ENCODE measurements at regions of chr6 and their contacts with region 1.

Region 1: DNA sequence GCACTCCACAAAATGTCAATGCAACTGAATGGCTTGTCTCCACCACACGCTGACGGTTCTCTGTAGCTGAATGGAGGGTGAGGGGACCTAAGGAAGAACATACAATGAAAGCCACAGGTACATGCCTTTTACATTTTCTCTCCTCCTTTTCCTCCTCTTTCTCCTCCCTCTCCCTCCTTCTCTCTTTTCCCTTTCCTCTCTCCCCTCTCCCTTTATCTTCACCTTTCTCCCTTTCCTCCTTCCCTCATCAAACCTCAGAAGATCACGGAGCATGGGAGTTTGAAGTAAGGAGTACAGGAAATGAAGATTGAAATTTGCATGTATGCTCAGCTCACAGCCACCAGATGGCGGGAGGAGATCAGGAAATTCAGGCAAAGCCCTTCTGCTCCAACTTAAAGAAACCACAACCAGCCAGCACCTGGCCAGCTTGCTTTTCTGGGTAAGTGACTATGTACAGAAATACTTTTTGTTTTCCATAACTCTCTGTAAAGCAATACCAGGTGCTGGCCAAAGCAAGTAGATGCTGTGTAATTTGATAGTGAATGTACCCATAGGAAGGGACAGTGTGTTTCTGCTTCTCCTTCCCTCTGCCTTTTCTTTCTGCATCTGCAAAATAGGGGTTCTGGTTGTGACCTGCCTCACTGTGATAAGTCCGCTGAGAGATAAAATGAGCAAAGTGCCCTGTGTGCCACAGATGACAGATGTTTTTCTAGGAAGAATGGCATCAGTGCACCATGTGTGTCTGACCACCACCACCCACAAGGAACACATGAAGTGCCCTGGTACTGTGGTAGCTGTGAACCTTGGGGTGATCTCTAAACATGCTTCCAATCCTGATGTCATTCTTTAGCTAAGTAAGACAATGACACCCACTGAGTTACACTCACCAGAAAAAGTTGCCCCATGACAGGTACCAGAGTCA is 18.6 kb upstream of the FOXO3 start:
- DNase-seq: peak; percentile 40 to 73
- ATAC-seq: peak; percentile 87 to 95
- H3K4me3 ChIP-seq: peak overlapping the region; percentile 16; the same call in 2 of the 3 replicates
- H3K27ac ChIP-seq: no peak overlapping the region
- H3K4me1 ChIP-seq: no peaks in the 10 kb centered on the region
- CTCF ChIP-seq: peak; percentile 92
- EP300 ChIP-seq: no peak
- POLR2A ChIP-seq: no peak
- RAD21 ChIP-seq: peak; percentile 92 to 96

Region 2: GRCh38 chr6:108531336-108531735 is 10.8 kb before region 1 on chr6:
- CTCF ChIA-PET with region 1: interaction called, 12 read pairs
- POLR2A ChIA-PET with region 1: no interaction called
- DNase-seq: no peak
- ATAC-seq: no peak
- H3K4me3 ChIP-seq: no peak overlapping the region
- H3K27ac ChIP-seq: no peak overlapping the region
- H3K4me1 ChIP-seq: no peaks in the 10 kb centered on the region
- CTCF ChIP-seq: no peak
- EP300 ChIP-seq: no peak
- POLR2A ChIP-seq: no peak
- RAD21 ChIP-seq: no peak

Region 3: GRCh38 chr6:108558372-108559096 is 16.4 kb after region 1 on chr6:
- CTCF ChIA-PET with region 1: interaction called, 11 read pairs
- POLR2A ChIA-PET with region 1: interaction called, 3 read pairs
- DNase-seq: peak; percentile 65 to 99
- ATAC-seq: peak; percentile 62 to 78
- H3K4me3 ChIP-seq: peak overlapping the region; percentile 95
- H3K27ac ChIP-seq: peak overlapping the region; percentile 95 to 98
- H3K4me1 ChIP-seq: peaks cover 15% of the 10 kb centered on the region; the same call in 1 of the 3 replicates
- CTCF ChIP-seq: no peak
- EP300 ChIP-seq: no peak
- POLR2A ChIP-seq: no peak
- RAD21 ChIP-seq: no peak

Region 4: DNA sequence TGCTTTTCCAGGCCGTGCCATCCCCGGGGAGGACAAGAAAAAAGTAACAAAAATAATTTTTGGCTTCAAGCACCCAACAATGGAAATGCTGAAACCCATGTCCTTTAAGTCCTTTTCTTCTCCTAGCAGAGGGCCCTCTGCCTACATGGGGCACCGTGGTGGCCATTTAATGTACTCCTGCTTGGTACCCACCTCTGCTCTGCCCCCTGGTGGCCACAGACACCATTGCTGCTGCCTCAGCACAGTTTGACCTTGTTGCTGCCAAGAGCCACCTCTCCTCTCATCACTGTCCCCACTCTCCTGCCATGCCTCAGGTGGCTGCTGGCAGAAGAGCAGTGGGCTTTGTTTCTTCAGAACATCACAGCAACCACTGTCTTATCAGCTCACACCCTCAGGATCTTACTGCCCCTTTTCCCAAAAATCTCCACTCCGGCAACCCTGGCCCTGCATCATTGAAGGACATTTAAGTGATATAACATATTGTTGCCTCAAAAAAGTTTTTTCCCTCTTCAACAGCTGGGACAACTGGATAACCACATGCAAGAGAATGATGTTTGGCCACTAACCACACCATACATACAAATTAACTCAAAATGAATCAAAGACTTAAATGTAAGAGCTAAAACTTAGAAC is 293.2 kb after region 1 on chr6:
- CTCF ChIA-PET with region 1: interaction called, 54 read pairs
- POLR2A ChIA-PET with region 1: no interaction called
- DNase-seq: peak; percentile 58 to 78
- ATAC-seq: peak; percentile 93 to 99
- H3K4me3 ChIP-seq: no peak overlapping the region
- H3K27ac ChIP-seq: no peak overlapping the region
- H3K4me1 ChIP-seq: no peaks in the 10 kb centered on the region
- CTCF ChIP-seq: peak; percentile 71
- EP300 ChIP-seq: no peak
- POLR2A ChIP-seq: no peak
- RAD21 ChIP-seq: peak; percentile 69 to 72

Region 5: DNA sequence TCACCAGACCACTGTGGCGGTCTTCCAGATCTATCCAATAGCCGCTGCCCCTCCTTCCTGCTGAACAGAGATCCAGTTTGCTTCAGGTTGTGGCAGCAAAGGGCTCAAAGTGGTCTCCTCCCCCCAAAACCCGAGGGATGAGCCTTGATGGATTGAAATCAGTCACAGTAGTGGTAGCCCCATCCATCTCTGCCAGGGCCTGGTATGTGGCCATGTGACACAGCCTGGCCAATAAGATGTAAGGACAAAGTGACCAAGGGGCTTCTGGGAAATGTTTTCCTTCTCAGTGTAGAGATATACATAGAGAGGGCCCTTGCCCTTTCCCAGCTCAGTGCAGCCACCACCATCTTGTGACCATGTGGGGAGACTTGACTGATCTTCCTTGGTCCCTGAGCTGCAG is 302.0 kb after region 1 on chr6:
- CTCF ChIA-PET with region 1: interaction called, 10 read pairs
- POLR2A ChIA-PET with region 1: interaction called, 3 read pairs
- DNase-seq: peak in 1 of 2 experiments; percentile 1
- ATAC-seq: no peak
- H3K4me3 ChIP-seq: no peak overlapping the region
- H3K27ac ChIP-seq: no peak overlapping the region
- H3K4me1 ChIP-seq: no peaks in the 10 kb centered on the region; the same call in 2 of the 3 replicates
- CTCF ChIP-seq: no peak
- EP300 ChIP-seq: no peak
- POLR2A ChIP-seq: no peak
- RAD21 ChIP-seq: no peak

Region 6: DNA sequence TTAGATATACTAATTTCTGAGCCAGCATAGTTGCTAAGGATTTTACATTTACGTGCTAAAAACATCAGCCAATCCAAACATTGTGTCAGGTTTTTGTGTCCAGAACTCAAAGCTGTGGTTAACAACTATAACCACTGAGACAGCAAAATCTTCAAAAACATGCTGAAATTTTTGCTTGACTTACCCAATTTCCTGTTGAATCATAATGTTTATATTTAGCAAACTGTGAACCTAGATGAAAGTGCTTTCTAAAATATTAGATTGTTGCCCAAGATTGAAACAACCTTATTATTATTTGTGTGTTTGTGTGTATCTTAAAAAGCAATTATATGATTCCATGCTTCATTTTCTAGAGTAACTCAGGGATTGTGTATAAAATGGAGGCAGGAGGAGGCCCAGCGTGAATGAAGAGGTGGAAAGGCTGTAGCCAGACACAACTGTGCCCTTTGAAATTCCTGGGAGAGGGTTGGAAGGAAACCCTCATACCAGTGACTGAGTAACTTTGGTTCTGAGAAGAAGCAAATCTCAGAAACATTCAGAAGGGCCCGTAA is 354.1 kb after region 1 on chr6:
- CTCF ChIA-PET with region 1: interaction called, 30 read pairs
- POLR2A ChIA-PET with region 1: no interaction called
- DNase-seq: no peak
- ATAC-seq: no peak
- H3K4me3 ChIP-seq: no peak overlapping the region
- H3K27ac ChIP-seq: peak overlapping the region in 1 of 2 experiments; percentile 8; a peak in 1 of 6 replicates
- H3K4me1 ChIP-seq: peaks cover 12% of the 10 kb centered on the region
- CTCF ChIP-seq: no peak
- EP300 ChIP-seq: no peak
- POLR2A ChIP-seq: no peak
- RAD21 ChIP-seq: no peak

Region 7: DNA sequence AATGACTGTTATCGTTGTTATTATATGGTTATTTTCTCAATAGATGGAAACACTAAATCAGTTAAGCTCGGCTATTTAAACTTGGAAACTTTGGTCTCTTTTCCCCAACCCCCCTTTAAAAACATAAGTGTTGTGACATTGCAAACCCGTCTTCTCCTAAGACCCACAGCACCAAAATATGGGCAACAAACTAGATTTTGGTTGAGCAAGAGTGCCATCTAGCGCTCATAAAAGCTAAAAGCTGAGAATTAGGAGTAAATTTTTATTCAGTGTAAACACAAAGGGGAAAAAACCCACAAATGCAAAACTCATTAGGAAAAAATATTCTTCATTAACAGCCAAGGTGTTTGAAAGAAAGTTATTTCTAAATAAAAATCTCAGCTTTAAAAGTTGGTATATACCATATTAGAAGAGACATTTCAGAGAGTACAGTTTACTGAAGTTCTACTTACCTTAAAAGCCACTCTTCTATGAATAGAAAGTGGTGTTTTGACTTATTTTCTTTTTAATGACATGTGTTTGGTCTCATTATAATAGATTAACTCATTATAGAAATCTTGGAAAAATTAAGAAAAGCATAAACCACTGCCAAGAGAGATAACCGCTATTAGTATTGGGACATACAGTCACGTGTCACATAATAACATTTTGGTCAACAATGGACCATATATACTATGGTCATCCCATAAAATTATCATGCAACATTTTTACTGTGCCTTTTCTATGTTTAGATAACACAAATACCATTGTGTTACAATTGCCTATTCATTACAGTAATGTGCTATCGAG is 531.4 kb after region 1 on chr6:
- CTCF ChIA-PET with region 1: interaction called, 79 read pairs
- POLR2A ChIA-PET with region 1: no interaction called
- DNase-seq: peak; percentile 15 to 45
- ATAC-seq: peak in 1 of 2 experiments; percentile 51; a peak in 2 of 6 replicates
- H3K4me3 ChIP-seq: no peak overlapping the region
- H3K27ac ChIP-seq: no peak overlapping the region
- H3K4me1 ChIP-seq: no peaks in the 10 kb centered on the region
- CTCF ChIP-seq: peak; percentile 73
- EP300 ChIP-seq: no peak
- POLR2A ChIP-seq: no peak
- RAD21 ChIP-seq: peak; percentile 71 to 80